ENCODE measurements at regions of chr9 and their contacts with region 1.

Region 1: DNA sequence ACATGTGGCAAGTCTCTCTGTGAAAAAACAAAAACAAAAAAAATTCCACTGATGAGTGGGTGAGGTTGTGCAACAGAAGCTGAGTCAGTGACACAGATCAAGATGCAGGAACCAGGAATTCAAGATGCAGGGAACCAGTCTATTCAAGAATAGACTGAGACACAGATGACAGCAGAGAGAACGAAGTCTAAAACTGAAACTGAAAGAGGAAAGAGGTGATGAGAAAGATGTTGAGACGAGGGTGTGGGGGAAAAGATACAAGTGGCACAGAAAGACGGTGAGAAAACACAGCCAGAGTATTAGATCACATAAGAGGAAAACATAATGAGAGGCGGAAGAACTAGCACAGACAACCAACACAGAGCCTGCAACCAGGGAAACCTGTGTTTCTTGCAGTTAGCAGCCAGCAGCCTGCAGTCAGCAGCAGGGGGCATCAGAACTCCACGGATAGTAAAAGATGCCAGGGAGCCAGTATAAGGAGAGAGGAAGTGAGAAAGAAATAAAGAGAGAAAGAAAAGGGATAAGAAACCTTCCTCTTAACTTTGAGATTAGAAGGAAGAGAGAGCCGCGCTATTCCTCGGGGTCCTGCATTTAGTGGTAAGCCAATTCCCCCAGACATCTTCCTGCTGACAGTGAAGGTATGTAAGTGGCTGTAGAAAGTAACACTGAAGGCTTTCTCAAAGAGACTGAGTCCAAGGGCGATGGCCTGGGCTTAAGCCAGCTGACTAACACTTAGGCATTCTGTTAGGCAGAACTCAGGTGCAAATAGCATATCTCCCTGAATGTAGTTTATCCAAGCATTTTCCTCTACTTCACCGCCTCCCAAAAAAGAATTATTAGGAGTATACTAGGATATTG is 79.0 kb downstream of the TLR4 start:
- DNase-seq: peak; percentile 44
- H3K4me3 Mint-ChIP-seq: no peak overlapping the region
- H3K27ac Mint-ChIP-seq: no peak overlapping the region
- H3K4me1 Mint-ChIP-seq: peaks cover 8% of the 10 kb centered on the region
- H3K27me3 Mint-ChIP-seq: peaks cover 8% of the 10 kb centered on the region

Region 2: DNA sequence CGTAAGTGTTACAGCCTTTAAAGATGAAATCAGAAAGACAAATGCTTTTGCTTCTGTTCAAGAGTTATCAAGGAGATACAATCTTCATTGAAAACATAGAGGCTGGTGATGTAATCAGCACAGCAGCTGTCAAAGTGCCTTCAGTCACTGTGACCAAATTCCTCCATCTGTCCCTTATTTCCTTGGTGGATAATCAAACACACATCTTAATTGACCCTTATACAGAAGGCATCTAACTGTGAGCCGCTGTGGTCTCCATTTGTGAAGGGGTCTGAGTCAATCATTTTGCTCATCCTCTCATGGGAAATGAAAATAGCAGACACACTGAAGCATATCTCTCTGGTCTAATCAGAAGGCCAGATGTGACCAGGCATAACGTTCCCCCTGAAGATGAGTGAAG is 209.1 kb before region 1 on chr9:
- intact Hi-C with region 1: no loop called
- DNase-seq: no peak
- H3K4me3 Mint-ChIP-seq: no peak overlapping the region
- H3K27ac Mint-ChIP-seq: no peak overlapping the region
- H3K4me1 Mint-ChIP-seq: no peaks in the 10 kb centered on the region
- H3K27me3 Mint-ChIP-seq: no peaks in the 10 kb centered on the region

Region 3: GRCh38 chr9:117718085-117718484 is 65.1 kb before region 1 on chr9:
- intact Hi-C with region 1: loop called (anchors 2 kb)
- DNase-seq: no peak
- H3K4me3 Mint-ChIP-seq: no peak overlapping the region
- H3K27ac Mint-ChIP-seq: no peak overlapping the region
- H3K4me1 Mint-ChIP-seq: peaks cover 19% of the 10 kb centered on the region
- H3K27me3 Mint-ChIP-seq: no peaks in the 10 kb centered on the region

Region 4: GRCh38 chr9:117825609-117826347 is 42.6 kb after region 1 on chr9:
- intact Hi-C with region 1: loop called (anchors 1 kb)
- DNase-seq: peak; percentile 41
- H3K4me3 Mint-ChIP-seq: no peak overlapping the region
- H3K27ac Mint-ChIP-seq: peak overlapping the region; percentile 53
- H3K4me1 Mint-ChIP-seq: peaks cover 12% of the 10 kb centered on the region
- H3K27me3 Mint-ChIP-seq: peaks cover 34% of the 10 kb centered on the region

Measured in activated T-helper 1 cell treated with anti-CD3 and anti-CD28 coated beads, Interleukin-12 subunit alpha, Interleukin-12 subunit beta, Interleukin-2, Interleukin-4 antibody, amounts not matched to agents 30 ng/mL and 10 ng/mL and 1 ng/mL, durations not matched to agents 14 hours and 24 hours and 36 hours (primary cell).